Prostate gland (tissue), 2 donors: ENCODE measurements at regions of chr2 and their contacts with region 1.

Region 1: DNA sequence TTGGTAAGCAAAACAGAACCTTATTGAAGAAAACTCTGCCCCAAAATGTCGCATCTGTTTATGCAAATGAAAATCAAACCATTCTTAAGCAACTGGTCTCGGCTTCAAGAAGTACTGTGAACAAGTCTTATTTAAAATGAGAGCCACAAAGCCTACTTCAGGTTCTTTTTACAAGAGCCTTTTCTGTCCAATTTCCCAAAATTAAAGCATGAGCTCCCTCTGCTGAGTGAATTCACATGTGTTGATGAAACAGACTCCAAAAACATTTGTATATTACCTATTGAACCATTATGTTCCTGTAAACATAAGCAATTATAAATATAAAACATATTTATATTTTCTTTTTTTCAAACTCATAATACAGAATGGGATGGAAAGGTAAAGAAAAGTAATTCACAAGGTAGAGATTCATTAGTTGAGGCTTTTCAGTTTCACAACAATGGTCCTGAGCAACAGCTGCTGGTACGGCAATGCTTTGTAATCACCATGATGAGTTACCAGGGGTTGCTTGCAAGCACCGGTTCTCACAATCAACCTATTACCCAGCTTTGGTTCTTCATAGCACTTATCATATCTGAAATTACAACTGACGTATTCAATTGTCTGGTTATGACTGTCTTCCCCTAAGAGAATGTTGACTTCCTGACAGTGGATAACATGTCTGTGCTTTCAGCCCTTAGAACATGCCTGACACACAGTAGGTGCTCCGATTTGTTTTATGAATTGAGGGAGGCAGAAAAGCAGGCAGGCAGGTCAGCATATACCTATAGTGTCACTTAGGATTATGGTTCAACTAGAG is 108.4 kb upstream of the BZW1 start:
- DNase-seq: peak; percentile 64
- H3K4me3 ChIP-seq: no peak overlapping the region
- H3K27ac ChIP-seq: no peak overlapping the region
- H3K4me1 ChIP-seq: no peaks in the 10 kb centered on the region
- H3K27me3 ChIP-seq: no peaks in the 10 kb centered on the region
- CTCF ChIP-seq: peak; percentile 22 to 90 (median 70)
- POLR2A ChIP-seq: no peak

Region 2: DNA sequence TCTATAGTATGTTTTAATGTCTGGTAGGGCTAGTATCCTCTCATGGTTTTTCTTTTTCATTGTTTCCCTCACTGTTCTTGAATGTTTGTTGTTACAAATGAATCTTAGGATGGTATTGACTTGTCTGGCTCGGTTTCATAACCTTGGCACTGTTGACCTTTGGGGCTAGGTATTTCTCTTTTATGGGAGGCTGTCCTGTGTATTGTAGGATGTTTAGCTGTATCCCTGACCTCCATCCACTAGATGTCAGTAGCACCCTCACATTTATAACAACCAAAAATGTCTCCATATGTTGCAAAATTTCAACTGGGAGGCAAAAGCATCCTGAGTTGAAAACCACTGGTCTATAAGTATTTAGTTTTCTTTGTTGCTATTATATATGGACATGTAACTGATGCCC is 124.5 kb before region 1 on chr2:
- intact Hi-C with region 1: loop called (anchors 2 kb)
- DNase-seq: no peak
- H3K4me3 ChIP-seq: no peak overlapping the region
- H3K27ac ChIP-seq: no peak overlapping the region
- H3K4me1 ChIP-seq: no peaks in the 10 kb centered on the region
- H3K27me3 ChIP-seq: no peaks in the 10 kb centered on the region
- CTCF ChIP-seq: peak in 3 of 4 experiments; percentile 47 to 59 (median 57)
- POLR2A ChIP-seq: no peak